Activated CD4-positive, alpha-beta memory T cell treated with anti-CD3 and anti-CD28 coated beads for 36 hours (primary cell): ENCODE measurements at regions of chr7 and their contacts with region 1.

Region 1: DNA sequence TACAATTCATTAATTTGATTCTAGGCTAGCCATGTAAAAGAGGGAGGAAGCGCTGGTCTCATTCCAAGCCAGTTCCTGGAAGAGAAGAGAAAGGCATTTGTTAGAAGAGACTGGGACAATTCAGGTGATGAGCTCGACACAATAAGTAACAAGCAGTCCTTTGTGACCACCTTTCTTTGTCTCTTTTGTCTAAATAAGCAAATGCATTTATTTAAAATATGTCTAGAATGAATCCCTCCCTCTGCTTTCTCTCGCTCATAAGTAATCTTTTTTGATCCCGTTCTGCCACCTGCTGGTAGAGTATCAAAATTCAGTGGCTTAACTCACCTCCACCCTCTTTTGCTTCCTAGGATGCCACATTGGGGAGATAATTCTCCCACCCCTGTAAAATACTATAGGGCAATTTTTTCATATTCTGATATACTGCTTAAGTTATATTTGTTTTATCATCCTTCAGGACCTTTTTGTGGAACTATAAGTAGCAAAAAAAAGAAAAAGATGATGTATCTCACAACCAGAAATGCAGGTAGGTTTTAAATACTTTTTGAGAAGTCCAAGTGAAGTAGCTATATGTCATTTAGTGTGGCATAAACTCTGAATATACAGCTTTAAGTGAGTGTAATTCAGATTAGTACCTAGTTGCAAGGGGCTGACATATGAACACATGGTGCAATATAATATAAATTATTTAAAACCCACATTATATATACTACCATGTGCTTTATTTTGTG is 91.5 kb downstream of the GSDME start:
- DNase-seq: peak; percentile 32
- H3K4me3 Mint-ChIP-seq: no peak overlapping the region
- H3K27ac Mint-ChIP-seq: no peak overlapping the region
- H3K4me1 Mint-ChIP-seq: no peaks in the 10 kb centered on the region
- H3K27me3 Mint-ChIP-seq: no peaks in the 10 kb centered on the region

Region 2: GRCh38 chr7:23570592-23571200 is 1095.0 kb before region 1 on chr7:
- CTCF ChIA-PET with region 1: interaction called, 4 read pairs
- POLR2A ChIA-PET with region 1: no interaction called
- intact Hi-C with region 1: loop called (anchors 10 kb)
- DNase-seq: peak; percentile 82
- H3K4me3 Mint-ChIP-seq: no peak overlapping the region
- H3K27ac Mint-ChIP-seq: no peak overlapping the region
- H3K4me1 Mint-ChIP-seq: no peaks in the 10 kb centered on the region
- H3K27me3 Mint-ChIP-seq: peaks cover 8% of the 10 kb centered on the region

Region 3: DNA sequence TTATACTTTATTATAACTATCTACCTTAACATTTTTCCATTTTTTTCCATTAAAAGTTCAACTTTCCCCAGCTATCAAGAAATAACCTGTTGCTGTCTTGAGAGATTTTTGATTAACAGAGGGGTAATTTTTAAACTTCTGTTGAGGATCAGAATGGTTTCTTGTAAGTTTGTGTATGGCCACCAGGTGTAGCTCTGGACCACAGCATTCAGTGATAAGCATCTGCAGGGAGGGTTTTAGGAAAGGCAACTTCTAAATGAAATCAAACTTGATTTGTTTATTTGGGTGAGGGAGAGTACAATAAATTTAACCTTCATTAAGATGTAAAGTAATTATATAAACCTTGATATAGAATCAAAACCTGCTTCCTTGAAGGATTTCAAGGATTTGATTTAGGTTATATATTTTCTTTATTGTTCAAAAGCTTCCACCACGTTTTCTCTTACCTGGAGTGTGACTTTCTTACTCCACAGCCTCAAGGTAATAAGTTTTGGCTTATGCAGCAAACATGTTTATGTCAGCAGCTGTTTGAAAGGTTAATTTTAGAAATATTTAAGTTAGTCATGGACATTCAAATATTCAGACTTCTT is 802.4 kb before region 1 on chr7:
- CTCF ChIA-PET with region 1: interaction called, 3 read pairs
- POLR2A ChIA-PET with region 1: no interaction called
- intact Hi-C with region 1: loop called (anchors 2 kb)
- DNase-seq: peak; percentile 22
- H3K4me3 Mint-ChIP-seq: no peak overlapping the region
- H3K27ac Mint-ChIP-seq: no peak overlapping the region
- H3K4me1 Mint-ChIP-seq: no peaks in the 10 kb centered on the region
- H3K27me3 Mint-ChIP-seq: peaks cover 8% of the 10 kb centered on the region

Region 4: GRCh38 chr7:24401628-24402593 is 263.8 kb before region 1 on chr7:
- CTCF ChIA-PET with region 1: interaction called, 4 read pairs
- POLR2A ChIA-PET with region 1: no interaction called
- intact Hi-C with region 1: loop called (anchors 10 kb)
- DNase-seq: no peak
- H3K4me3 Mint-ChIP-seq: no peak overlapping the region
- H3K27ac Mint-ChIP-seq: no peak overlapping the region
- H3K4me1 Mint-ChIP-seq: peaks cover 8% of the 10 kb centered on the region
- H3K27me3 Mint-ChIP-seq: no peaks in the 10 kb centered on the region

Region 5: GRCh38 chr7:24690251-24690650 is 24.5 kb after region 1 on chr7:
- CTCF ChIA-PET with region 1: no interaction called
- POLR2A ChIA-PET with region 1: no interaction called
- intact Hi-C with region 1: no loop called
- DNase-seq: no peak
- H3K4me3 Mint-ChIP-seq: no peak overlapping the region
- H3K27ac Mint-ChIP-seq: no peak overlapping the region
- H3K4me1 Mint-ChIP-seq: no peaks in the 10 kb centered on the region
- H3K27me3 Mint-ChIP-seq: no peaks in the 10 kb centered on the region